Activated CD8-positive, alpha-beta T cell treated with anti-CD3 and anti-CD28 coated beads for 36 hours (primary cell): ENCODE measurements at regions of chr11 and their contacts with region 1.

Region 1: GRCh38 chr11:125111343-125112207 is at the start of gene TMEM218:
- DNase-seq: peak; percentile 98
- ATAC-seq: peak; percentile 97
- H3K4me3 Mint-ChIP-seq: peak within 1 kb of the TSS; percentile 85
- H3K27ac Mint-ChIP-seq: peak within 1 kb of the TSS; percentile 91
- H3K4me1 Mint-ChIP-seq: peaks cover 17% of the 10 kb centered on the region
- H3K27me3 Mint-ChIP-seq: no peaks in the 10 kb centered on the region
- CTCF ChIP-seq: no peak
- total RNA-seq, gene TMEM218: 12.7 to 13.3 TPM

Region 2: GRCh38 chr11:125091247-125091876 is 20.2 kb before region 1 on chr11:
- CTCF ChIA-PET with region 1: interaction called, 22 read pairs
- POLR2A ChIA-PET with region 1: interaction called, 3 read pairs
- intact Hi-C with region 1: no loop called
- DNase-seq: peak; percentile 19
- ATAC-seq: peak; percentile 72
- H3K4me3 Mint-ChIP-seq: no peak overlapping the region
- H3K27ac Mint-ChIP-seq: no peak overlapping the region
- H3K4me1 Mint-ChIP-seq: peaks cover 5% of the 10 kb centered on the region
- H3K27me3 Mint-ChIP-seq: no peaks in the 10 kb centered on the region
- CTCF ChIP-seq: peak; percentile 65

Region 3: DNA sequence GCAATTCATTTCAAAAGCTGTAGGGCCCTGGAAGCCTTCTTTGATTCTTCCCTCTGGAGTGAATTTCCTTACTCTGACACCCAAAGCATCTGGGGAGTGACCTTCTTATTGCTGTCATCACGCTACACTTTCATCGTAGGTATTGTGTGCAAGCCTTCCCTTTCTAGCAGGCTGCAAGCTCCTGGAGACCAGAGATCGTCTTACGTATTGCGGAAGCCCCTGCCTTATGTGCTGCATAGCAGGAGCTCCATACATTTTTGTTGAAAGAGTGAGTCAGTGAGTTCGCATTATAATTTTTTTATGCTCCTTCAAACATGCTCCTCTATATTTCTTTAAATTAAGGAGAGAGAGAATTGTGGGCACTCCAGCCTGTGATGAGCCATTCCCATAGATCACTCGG is 21.0 kb after region 1 on chr11:
- CTCF ChIA-PET with region 1: no interaction called
- POLR2A ChIA-PET with region 1: no interaction called
- intact Hi-C with region 1: no loop called
- DNase-seq: no peak
- ATAC-seq: no peak
- H3K4me3 Mint-ChIP-seq: no peak overlapping the region
- H3K27ac Mint-ChIP-seq: no peak overlapping the region
- H3K4me1 Mint-ChIP-seq: no peaks in the 10 kb centered on the region
- H3K27me3 Mint-ChIP-seq: peaks cover 29% of the 10 kb centered on the region
- CTCF ChIP-seq: no peak

Region 4: GRCh38 chr11:125235071-125235471 is 123.5 kb after region 1 on chr11:
- CTCF ChIA-PET with region 1: no interaction called
- POLR2A ChIA-PET with region 1: no interaction called
- intact Hi-C with region 1: no loop called
- DNase-seq: no peak
- ATAC-seq: no peak
- H3K4me3 Mint-ChIP-seq: no peak overlapping the region
- H3K27ac Mint-ChIP-seq: no peak overlapping the region
- H3K4me1 Mint-ChIP-seq: no peaks in the 10 kb centered on the region
- H3K27me3 Mint-ChIP-seq: peaks cover 18% of the 10 kb centered on the region
- CTCF ChIP-seq: no peak